ENCODE measurements at regions of chr17 and their contacts with region 1.

Region 1: DNA sequence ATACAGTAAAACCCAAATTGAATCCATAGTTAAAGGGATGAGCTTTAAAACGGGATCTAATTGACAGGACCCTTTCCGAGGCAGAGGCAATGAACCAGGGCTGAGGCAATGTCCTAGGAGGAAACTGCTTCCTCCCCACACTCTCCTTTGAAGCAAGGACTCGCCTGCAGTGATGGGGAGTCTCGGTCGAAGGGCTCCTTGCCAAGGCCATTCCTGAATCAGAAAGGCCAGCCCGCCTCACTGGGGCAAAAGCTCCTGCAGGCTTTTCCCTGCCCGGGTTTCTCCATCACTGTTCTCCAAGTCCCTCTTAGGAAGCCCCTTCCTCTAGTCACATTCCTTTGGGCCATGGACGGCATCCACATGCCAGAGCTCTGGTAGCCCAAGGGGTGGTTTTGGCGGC is 132.0 kb downstream of the RBFOX3 start:
- DNase-seq: no peak
- H3K4me3 ChIP-seq: no peak overlapping the region
- H3K27ac ChIP-seq: no peak overlapping the region
- H3K4me1 ChIP-seq: no peaks in the 10 kb centered on the region
- H3K27me3 ChIP-seq: no peaks in the 10 kb centered on the region
- CTCF ChIP-seq: no peak
- POLR2A ChIP-seq: no peak

Region 2: DNA sequence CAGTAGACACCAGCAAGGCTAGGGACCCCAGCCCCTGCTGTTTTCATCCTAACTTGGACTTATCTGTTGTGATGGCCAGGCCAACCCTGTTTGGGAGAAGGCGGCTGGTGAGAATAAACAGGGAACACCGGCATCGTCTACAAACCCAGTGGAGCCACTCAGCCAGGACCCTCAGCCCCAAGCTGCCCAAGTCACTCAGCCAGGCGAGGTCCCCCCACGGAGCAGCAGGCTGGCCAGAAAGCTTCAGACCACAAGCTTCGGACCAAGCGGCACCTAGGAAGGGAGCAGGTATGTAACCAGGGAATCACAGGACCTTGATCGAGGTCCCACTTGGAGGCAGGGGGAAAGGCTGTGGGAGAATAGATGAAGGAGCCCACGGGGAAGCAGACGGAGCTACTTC is 108.6 kb after region 1 on chr17:
- intact Hi-C with region 1: loop called (anchors 1 kb)
- DNase-seq: no peak
- H3K4me3 ChIP-seq: no peak overlapping the region
- H3K27ac ChIP-seq: no peak overlapping the region
- H3K4me1 ChIP-seq: no peaks in the 10 kb centered on the region
- H3K27me3 ChIP-seq: no peaks in the 10 kb centered on the region
- CTCF ChIP-seq: no peak
- POLR2A ChIP-seq: no peak

Measured in vagina (tissue), 2 donors.